ENCODE measurements at regions of chr19 and their contacts with region 1.

Region 1: DNA sequence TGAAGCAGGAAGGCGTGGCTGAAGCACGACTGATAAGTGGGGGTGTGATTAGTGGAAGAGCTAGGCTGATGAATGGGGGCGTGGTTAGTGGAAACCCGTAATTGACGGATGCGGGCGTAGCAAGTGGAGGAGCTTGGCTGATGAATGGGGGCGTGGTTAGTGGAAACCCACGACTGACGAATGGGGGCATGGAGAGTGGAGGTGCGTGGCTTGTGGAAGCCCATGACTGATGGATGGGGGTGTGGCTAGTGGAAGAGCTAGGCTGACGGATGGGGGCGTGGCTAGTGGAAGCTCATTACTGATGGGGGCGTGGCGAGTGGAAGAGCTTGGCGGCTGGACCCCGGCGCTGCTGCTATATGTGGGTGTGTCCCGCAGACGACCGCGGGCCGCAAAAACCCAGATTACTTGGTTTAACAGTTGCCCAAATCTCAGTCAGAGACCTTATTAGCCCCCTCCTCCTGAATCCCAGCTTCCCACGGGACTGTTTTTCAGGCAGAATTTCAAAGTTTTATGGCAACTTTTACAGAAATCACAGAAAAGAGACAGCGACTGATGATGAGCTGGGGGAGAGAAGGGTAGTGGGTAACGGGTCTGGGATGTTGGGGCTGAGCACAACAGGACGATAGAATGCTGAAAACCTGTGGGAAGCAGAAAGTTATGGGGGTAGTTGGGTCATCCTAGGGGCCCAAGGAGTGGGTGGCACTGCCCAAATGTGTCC is 9.0 kb upstream of the MEIS3 start:
- DNase-seq: peak; percentile 100
- ATAC-seq: peak; percentile 87
- H3K4me3 ChIP-seq: peak overlapping the region; percentile 24 to 55
- H3K27ac ChIP-seq: peak overlapping the region; percentile 59
- H3K4me1 ChIP-seq: peaks cover 29 to 47% of the 10 kb centered on the region in 2 experiments
- H3K27me3 ChIP-seq: no peaks in the 10 kb centered on the region
- CTCF ChIP-seq: no peak
- POLR2A ChIP-seq: no peak
- RAD21 ChIP-seq: no peak

Region 2: GRCh38 chr19:47284324-47284899 is 143.9 kb before region 1 on chr19:
- CTCF ChIA-PET with region 1: interaction called, 8 read pairs
- POLR2A ChIA-PET with region 1: interaction called, 7 read pairs
- RAD21 ChIA-PET with region 1: no interaction called
- intact Hi-C with region 1: loop called (anchors 5 kb)
- DNase-seq: no peak
- ATAC-seq: peak; percentile 26; the same call in 1 of the 2 replicates
- H3K4me3 ChIP-seq: no peak overlapping the region
- H3K27ac ChIP-seq: no peak overlapping the region
- H3K4me1 ChIP-seq: peaks cover 13 to 26% of the 10 kb centered on the region in 2 experiments
- H3K27me3 ChIP-seq: no peaks in the 10 kb centered on the region
- CTCF ChIP-seq: peak; percentile 72 to 94 (median 76); a peak in 5 of 6 replicates
- POLR2A ChIP-seq: no peak
- RAD21 ChIP-seq: peak; percentile 79

Region 3: GRCh38 chr19:47348819-47349795 is 79.2 kb before region 1 on chr19 and contains the start of gene DHX34:
- CTCF ChIA-PET with region 1: interaction called, 18 read pairs
- POLR2A ChIA-PET with region 1: no interaction called
- RAD21 ChIA-PET with region 1: interaction called, 3 to 5 read pairs
- intact Hi-C with region 1: no loop called
- DNase-seq: peak; percentile 98
- ATAC-seq: peak; percentile 96
- H3K4me3 ChIP-seq: peak within 1 kb of the TSS; percentile 70 to 85
- H3K27ac ChIP-seq: peak within 1 kb of the TSS; percentile 71
- H3K4me1 ChIP-seq: peaks cover 15 to 22% of the 10 kb centered on the region in 2 experiments; a peak in 3 of 4 replicates
- H3K27me3 ChIP-seq: no peaks in the 10 kb centered on the region
- CTCF ChIP-seq: peak; percentile 69 to 98 (median 97)
- POLR2A ChIP-seq: peak; percentile 74
- RAD21 ChIP-seq: no peak
- total RNA-seq, gene DHX34: 30.5 TPM

Region 4: GRCh38 chr19:47381653-47382279 is 46.6 kb before region 1 on chr19:
- CTCF ChIA-PET with region 1: no interaction called
- POLR2A ChIA-PET with region 1: no interaction called
- RAD21 ChIA-PET with region 1: no interaction called
- intact Hi-C with region 1: no loop called
- DNase-seq: no peak
- ATAC-seq: no peak
- H3K4me3 ChIP-seq: no peak overlapping the region
- H3K27ac ChIP-seq: no peak overlapping the region
- H3K4me1 ChIP-seq: 0 out of 4 replicates have a peak, but pooled peaks cover 0 to 4% of the 10 kb centered on the region in 2 experiments
- H3K27me3 ChIP-seq: no peaks in the 10 kb centered on the region
- CTCF ChIP-seq: no peak
- POLR2A ChIP-seq: no peak
- RAD21 ChIP-seq: no peak

Region 5: DNA sequence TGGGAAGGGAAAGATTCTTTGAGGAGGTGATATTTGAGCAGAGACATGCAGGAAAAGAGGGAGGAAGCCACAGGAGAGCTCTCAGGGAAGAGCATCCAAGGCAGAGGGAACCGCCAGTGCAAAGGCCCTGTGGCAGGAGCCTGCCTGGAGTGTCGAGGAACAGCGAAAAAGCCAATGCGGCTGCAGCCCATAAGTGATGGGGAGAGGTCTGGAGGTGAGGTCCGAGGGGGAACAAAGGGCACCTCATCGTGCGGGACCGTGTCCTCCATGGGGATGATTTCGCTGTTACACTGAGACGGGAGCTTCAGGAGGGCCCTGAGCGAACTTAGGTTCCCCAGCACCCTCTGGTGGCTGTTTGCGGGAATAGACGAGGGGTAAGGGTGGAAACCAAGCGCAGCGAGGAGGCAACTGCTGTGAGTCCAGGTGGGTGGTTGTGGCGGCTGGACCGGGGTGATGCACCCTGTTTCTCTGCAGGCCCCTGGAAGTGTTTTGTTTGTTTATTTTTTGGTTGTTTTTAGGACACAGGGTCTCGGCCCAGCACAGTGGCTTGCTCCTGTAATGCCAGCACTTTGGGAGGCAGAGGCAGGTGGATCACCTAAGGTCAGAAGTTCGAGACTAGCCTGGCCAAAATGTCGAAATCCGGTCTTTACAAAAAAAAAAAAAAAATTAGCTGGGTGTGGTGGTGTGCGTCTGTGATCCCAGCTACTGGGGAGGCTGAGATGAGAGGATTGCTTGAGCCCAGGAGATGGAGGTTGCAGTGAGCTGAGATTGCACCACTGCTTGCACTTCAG is 279.0 kb after region 1 on chr19:
- CTCF ChIA-PET with region 1: interaction called, 14 read pairs
- POLR2A ChIA-PET with region 1: interaction called, 11 read pairs
- RAD21 ChIA-PET with region 1: no interaction called
- intact Hi-C with region 1: no loop called
- DNase-seq: peak; percentile 81
- ATAC-seq: peak; percentile 98
- H3K4me3 ChIP-seq: peak overlapping the region; percentile 24 to 35
- H3K27ac ChIP-seq: no peak overlapping the region; the same call in 1 of the 2 replicates
- H3K4me1 ChIP-seq: peaks cover 0 to 11% of the 10 kb centered on the region in 2 experiments; a peak in 2 of 4 replicates
- H3K27me3 ChIP-seq: no peaks in the 10 kb centered on the region
- CTCF ChIP-seq: peak; percentile 86 to 93 (median 92)
- POLR2A ChIP-seq: no peak
- RAD21 ChIP-seq: peak; percentile 94

Region 6: DNA sequence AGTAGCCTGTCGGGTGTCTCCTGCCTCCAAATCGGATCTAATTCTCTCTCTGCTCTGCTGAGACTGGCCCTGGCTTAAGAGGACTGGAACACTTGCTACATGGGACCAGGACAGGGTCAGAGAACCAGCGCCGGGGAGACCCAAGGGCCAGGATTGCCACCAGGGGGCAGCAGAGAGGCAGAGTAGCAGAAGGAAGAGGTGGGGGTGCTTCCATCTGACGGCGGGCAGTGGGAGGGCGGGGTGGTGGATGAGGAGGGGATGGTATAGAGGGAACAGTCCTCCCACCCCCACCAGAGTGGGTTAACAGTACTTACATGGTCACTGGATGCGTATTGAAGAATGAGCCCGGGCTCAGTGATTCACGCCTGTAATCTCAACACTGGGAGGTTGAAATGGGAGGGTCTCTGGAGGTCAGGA is 362.1 kb after region 1 on chr19:
- CTCF ChIA-PET with region 1: no interaction called
- POLR2A ChIA-PET with region 1: interaction called, 3 read pairs
- RAD21 ChIA-PET with region 1: no interaction called
- intact Hi-C with region 1: loop called (anchors 5 kb)
- DNase-seq: peak; percentile 88
- ATAC-seq: peak; percentile 88
- H3K4me3 ChIP-seq: peak overlapping the region; percentile 21 to 23
- H3K27ac ChIP-seq: peak overlapping the region; percentile 81
- H3K4me1 ChIP-seq: peaks cover 14 to 25% of the 10 kb centered on the region in 2 experiments
- H3K27me3 ChIP-seq: no peaks in the 10 kb centered on the region
- CTCF ChIP-seq: peak; percentile 87 to 98 (median 97)
- POLR2A ChIP-seq: no peak
- RAD21 ChIP-seq: peak; percentile 64

Measured in HCT116 (cell line).